Activated T-helper 1 cell treated with anti-CD3 and anti-CD28 coated beads, Interleukin-12 subunit alpha, Interleukin-12 subunit beta, Interleukin-2, Interleukin-4 antibody, amounts not matched to agents 30 ng/mL and 10 ng/mL and 1 ng/mL, durations not matched to agents 14 hours and 24 hours and 36 hours (primary cell): ENCODE measurements at regions of chr5 and their contacts with region 1.

Region 1: GRCh38 chr5:64606926-64607325 is 83.4 kb upstream of the SHISAL2B start:
- DNase-seq: no peak
- H3K4me3 Mint-ChIP-seq: no peak overlapping the region
- H3K27ac Mint-ChIP-seq: no peak overlapping the region
- H3K4me1 Mint-ChIP-seq: no peaks in the 10 kb centered on the region
- H3K27me3 Mint-ChIP-seq: peaks cover 5% of the 10 kb centered on the region

Region 2: DNA sequence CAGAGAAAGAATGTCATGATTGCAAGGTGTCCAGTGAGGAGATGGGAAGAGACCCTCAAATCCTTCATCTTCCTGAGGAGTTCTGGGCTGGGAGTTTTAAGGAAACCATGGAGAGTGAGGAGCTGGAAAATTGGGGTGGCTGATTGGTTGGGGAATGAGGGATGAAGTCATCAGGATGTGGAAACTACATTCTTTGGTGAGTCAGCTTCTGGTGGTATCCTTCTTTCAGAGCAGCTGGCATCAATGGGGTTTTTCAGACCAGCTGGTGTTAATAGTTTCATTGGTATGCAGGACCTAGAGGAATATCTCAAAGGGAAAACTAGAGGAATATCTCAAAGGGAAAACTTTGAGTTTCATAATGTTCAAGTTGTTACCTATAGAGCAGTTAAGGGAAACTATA is 396.1 kb before region 1 on chr5:
- intact Hi-C with region 1: loop called (anchors 5 kb)
- DNase-seq: no peak
- H3K4me3 Mint-ChIP-seq: no peak overlapping the region
- H3K27ac Mint-ChIP-seq: no peak overlapping the region
- H3K4me1 Mint-ChIP-seq: no peaks in the 10 kb centered on the region
- H3K27me3 Mint-ChIP-seq: no peaks in the 10 kb centered on the region

Region 3: GRCh38 chr5:65172486-65173129 is 565.7 kb after region 1 on chr5:
- intact Hi-C with region 1: no loop called
- DNase-seq: no peak
- H3K4me3 Mint-ChIP-seq: no peak overlapping the region
- H3K27ac Mint-ChIP-seq: no peak overlapping the region
- H3K4me1 Mint-ChIP-seq: peaks cover 6% of the 10 kb centered on the region
- H3K27me3 Mint-ChIP-seq: peaks cover 9% of the 10 kb centered on the region